AG04449 (cell line): ENCODE measurements at regions of chr19 and their contacts with region 1.

Region 1: DNA sequence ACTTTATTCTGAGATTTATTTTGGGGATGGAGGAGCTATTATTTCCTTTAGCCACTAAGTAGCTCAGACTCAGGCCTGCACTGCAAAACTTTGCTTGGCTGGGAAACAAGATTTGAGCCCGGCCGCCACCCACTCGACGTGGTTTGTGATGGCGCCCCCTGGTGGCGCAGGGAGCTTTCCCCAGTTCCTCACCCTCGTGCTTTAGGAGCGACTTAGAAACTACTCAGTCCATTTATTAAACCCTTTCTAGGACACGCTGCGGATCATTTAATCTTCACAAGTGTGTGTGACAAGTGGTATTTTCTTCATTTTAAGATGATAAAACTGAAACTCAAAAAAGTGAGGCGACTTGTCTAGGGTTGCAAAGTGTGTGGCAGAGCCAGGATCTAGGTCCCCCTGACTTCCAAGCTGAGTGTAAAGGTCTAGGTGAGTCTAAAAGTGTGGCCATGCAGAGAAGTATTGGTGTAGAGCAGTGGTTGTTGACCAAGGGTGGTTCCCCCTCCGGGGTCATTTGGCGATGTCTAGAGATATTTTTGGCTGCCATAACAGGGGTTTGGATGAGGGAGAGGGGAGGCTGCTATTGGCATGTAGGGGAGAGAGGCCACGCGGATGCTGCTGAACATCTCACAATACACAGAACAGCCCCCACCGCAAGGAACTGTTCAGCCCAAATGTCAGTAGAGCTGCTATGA is 2.2 kb downstream of the CXCL17 start:
- DNase-seq: no peak
- H3K4me3 ChIP-seq: no peak overlapping the region
- CTCF ChIP-seq: peak; percentile 82

Region 2: GRCh38 chr19:42423462-42424344 is 16.8 kb before region 1 on chr19:
- CTCF ChIA-PET with region 1: interaction called, 36 read pairs
- POLR2A ChIA-PET with region 1: no interaction called
- DNase-seq: peak; percentile 64
- H3K4me3 ChIP-seq: peak overlapping the region; percentile 74
- CTCF ChIP-seq: no peak

Region 3: GRCh38 chr19:42455621-42456081 is 15.1 kb after region 1 on chr19:
- CTCF ChIA-PET with region 1: interaction called, 109 read pairs
- POLR2A ChIA-PET with region 1: no interaction called
- DNase-seq: no peak
- H3K4me3 ChIP-seq: no peak overlapping the region
- CTCF ChIP-seq: no peak

Region 4: DNA sequence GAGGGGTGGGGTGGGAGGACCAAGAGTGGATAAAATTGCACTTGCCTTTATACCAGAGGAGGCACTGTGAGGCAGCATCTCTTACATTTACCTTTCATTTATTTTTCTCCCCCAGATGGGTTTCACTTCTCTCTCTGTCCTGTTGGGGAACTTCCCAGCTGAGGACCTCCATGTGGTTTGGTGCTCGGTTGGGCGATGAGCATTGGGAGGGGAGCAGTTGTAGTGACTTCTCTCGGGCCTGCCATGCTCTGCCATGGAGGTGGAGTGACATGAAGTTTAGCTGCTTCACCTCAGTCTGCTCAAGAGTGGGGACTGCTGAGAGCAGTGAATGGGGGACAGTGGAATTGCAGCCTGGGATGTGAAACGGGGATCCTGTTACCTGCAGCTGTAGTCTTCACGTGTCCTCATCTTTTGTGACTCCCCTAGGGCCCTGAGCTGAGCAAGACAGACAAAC is 25.4 kb after region 1 on chr19:
- CTCF ChIA-PET with region 1: interaction called, 18 read pairs
- POLR2A ChIA-PET with region 1: no interaction called
- DNase-seq: no peak
- H3K4me3 ChIP-seq: no peak overlapping the region
- CTCF ChIP-seq: no peak

Region 5: GRCh38 chr19:42471554-42472249 is 31.2 kb after region 1 on chr19:
- CTCF ChIA-PET with region 1: interaction called, 18 read pairs
- POLR2A ChIA-PET with region 1: no interaction called
- DNase-seq: no peak
- H3K4me3 ChIP-seq: no peak overlapping the region
- CTCF ChIP-seq: no peak

Region 6: DNA sequence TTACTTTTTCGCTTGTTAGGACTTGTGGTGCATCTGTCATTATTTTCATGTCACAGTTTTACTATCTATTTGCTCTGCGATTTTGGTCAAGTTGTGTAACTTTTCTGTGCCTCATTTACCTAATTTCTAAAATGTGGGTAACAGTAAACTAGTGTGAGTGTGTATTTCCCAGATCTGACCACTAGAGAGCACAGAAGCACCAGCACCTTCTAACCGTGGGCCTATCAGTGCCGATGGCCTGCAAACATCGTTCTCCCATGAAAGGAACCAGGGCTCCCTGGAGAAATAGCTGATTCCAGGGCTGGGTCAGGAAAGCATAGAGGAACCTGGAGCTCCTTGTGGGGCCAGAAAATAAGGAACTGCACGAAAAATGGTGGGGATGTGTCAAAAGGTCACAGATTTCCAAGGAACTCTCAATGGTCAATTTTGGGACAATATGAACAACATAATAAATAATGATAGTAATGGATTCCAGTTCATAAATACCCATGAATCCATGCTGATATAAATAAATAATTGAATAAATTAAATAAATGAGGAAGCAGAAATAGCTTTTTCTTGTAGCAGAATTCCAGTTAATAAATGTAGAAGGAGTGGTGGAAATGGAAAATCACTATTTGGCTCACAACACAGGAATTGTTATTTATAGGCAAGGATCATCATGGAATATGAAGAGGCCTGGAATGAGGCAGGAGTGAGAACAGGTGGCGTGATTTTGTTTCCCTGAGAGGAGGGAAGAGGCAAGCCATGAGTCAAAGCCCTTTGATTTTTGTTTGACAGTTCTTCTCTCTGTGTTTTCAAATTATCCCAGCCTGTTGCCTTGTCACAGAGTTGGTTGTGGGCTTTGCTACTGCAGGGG is 123.1 kb after region 1 on chr19:
- CTCF ChIA-PET with region 1: interaction called, 12 read pairs
- POLR2A ChIA-PET with region 1: no interaction called
- DNase-seq: no peak
- H3K4me3 ChIP-seq: no peak overlapping the region
- CTCF ChIP-seq: peak; percentile 69